ENCODE measurements at regions of chr18 and their contacts with region 1.

Region 1: DNA sequence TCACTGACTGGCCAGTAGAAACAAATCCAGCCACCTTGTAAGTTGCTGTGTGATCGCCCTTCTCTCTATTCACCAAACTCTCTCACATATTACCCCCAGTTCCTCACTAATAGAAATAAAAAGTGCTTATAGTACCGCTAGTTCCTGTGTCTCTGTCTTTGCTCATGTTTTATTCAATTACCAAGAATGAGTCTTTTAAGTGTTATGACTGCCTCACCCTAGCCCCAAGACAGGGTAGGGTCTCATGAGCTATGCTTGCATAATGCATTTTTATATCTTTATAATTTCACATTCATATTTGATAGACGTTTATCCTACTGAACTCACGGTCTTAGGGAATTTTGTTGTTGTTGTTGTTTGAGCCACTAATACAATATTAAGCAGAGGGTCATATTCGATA is 109.6 kb upstream of the DOK6 start:
- DNase-seq: no peak
- ATAC-seq: no peak
- H3K4me3 ChIP-seq: no peak overlapping the region
- H3K27ac ChIP-seq: no peak overlapping the region
- H3K4me1 ChIP-seq: no peaks in the 10 kb centered on the region
- H3K27me3 ChIP-seq: no peaks in the 10 kb centered on the region
- CTCF ChIP-seq: no peak
- POLR2A ChIP-seq: no peak
- RAD21 ChIP-seq: no peak

Region 2: GRCh38 chr18:69265656-69266055 is 25.4 kb before region 1 on chr18:
- CTCF ChIA-PET with region 1: no interaction called
- POLR2A ChIA-PET with region 1: no interaction called
- dilution Hi-C with region 1: no loop called
- in situ Hi-C with region 1: no loop called
- intact Hi-C with region 1: loop called (anchors 1 kb)
- DNase-seq: peak; percentile 0
- ATAC-seq: no peak
- H3K4me3 ChIP-seq: no peak overlapping the region
- H3K27ac ChIP-seq: no peak overlapping the region
- H3K4me1 ChIP-seq: no peaks in the 10 kb centered on the region
- H3K27me3 ChIP-seq: no peaks in the 10 kb centered on the region
- CTCF ChIP-seq: no peak
- POLR2A ChIP-seq: no peak
- RAD21 ChIP-seq: no peak